ENCODE measurements at regions of chr18 and their contacts with region 1.

Region 1: DNA sequence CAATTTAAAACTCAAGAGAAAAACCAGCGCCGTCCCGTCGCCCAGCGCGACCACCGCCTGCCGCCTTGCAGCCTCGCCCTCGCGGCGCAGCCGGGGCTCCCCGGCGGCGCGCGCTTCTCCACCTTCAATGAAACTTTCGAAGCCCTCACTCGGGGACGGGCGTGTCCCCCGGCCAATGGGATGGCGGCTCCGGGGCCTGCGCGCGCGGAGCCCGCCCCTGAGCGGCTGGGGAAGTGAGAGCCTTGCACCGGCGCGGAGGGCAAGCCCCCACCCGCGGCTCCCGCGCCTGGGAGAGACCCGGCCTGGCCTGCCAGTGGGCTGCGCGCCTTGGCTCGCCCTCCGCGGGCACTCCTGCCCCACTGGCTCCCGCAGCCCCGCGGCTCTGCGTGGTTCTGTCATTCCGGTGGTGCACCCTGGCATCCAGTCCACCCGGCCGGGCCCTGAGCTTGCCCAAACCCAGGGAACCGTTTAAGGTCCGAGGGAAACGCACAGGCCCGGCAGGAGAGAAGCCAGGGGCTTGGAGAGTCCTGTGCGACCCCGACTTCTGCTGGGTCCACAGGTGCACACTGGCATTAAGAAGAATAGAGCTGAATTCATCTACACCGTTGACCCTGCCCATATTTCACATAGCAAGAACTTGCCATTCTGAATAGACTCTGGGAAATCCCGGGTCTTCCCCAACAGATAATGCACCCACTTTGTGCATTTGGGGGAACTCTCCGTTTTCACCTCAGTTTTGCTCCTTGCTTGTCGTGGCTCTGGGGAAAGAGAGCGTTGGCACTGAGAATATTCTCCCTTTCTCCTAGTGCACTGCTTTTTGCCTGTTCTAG is at the start of gene PIEZO2:
- DNase-seq: peak; percentile 29 to 36
- ATAC-seq: peak; percentile 50 to 81 (median 67)
- H3K4me3 ChIP-seq: peak within 1 kb of the TSS; percentile 4 to 53 (median 40)
- H3K27ac ChIP-seq: no peak within 1 kb of the TSS
- H3K4me1 ChIP-seq: peaks cover 0 to 28% (median 15%) of the 10 kb centered on the region in 9 donors
- H3K27me3 ChIP-seq: peaks cover 20 to 85% (median 70%) of the 10 kb centered on the region in 7 donors
- CTCF ChIP-seq: no peak
- total RNA-seq, gene PIEZO2: 0.11 to 1.4 (median 0.26) TPM in 9 of 10 donors, not detected in the other

Region 2: DNA sequence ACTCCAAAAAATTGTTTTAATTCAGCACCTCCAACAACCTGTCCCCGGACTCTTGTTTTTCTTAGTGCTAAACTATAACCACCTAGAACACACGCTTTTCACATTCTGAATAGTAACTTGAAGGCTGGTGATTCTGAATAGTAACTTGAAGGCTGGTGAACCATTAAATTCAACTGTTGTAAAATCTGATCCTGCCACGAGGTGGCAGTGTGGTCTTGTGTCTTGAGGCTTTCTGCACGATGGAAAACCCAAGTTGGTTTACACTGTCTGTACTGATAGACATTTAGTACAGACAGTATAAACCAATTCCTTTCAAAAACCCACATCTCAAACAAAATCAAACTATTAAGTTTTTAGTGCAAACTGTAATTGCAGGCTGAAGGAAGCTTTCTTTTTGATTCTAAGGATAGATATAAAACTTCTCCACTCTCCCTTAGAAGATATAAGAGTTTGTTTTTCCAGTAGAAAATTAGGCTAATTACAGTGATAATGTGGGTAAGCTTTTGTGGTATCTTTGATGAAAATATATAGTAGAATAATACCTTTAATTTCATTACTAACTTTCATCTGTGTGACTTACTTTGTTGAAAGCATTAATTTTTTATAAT is 1178.2 kb before region 1 on chr18:
- intact Hi-C with region 1: loop called in 1 of 10 experiments (anchors 10 kb)
- DNase-seq: peak in 1 of 2 donors; percentile 83
- ATAC-seq: peak; percentile 48 to 82 (median 67)
- H3K4me3 ChIP-seq: no peak overlapping the region
- H3K27ac ChIP-seq: no peak overlapping the region
- H3K4me1 ChIP-seq: peaks cover 0 to 23% (median 3%) of the 10 kb centered on the region in 9 donors
- H3K27me3 ChIP-seq: peaks cover 0 to 24% (median 0%) of the 10 kb centered on the region in 7 donors
- CTCF ChIP-seq: peak; percentile 64 to 89 (median 84)

Region 3: GRCh38 chr18:10787293-10787901 is 362.3 kb before region 1 on chr18:
- intact Hi-C with region 1: loop called in 1 of 10 experiments (anchors 10 kb)
- DNase-seq: peak; percentile 50 to 69
- ATAC-seq: peak in 1 of 8 donors; percentile 42
- H3K4me3 ChIP-seq: no peak overlapping the region
- H3K27ac ChIP-seq: no peak overlapping the region
- H3K4me1 ChIP-seq: peaks cover 0 to 20% (median 0%) of the 10 kb centered on the region in 9 donors
- H3K27me3 ChIP-seq: peaks cover 0 to 16% (median 7%) of the 10 kb centered on the region in 7 donors
- CTCF ChIP-seq: peak; percentile 24 to 89 (median 67)

Region 4: GRCh38 chr18:10860928-10861327 is 288.7 kb before region 1 on chr18:
- intact Hi-C with region 1: loop called in 3 of 10 experiments (anchors 10 kb)
- DNase-seq: no peak
- ATAC-seq: no peak
- H3K4me3 ChIP-seq: no peak overlapping the region
- H3K27ac ChIP-seq: no peak overlapping the region
- H3K4me1 ChIP-seq: no peaks in the 10 kb centered on the region
- H3K27me3 ChIP-seq: peaks cover 0 to 5% (median 0%) of the 10 kb centered on the region in 7 donors
- CTCF ChIP-seq: no peak

Region 5: DNA sequence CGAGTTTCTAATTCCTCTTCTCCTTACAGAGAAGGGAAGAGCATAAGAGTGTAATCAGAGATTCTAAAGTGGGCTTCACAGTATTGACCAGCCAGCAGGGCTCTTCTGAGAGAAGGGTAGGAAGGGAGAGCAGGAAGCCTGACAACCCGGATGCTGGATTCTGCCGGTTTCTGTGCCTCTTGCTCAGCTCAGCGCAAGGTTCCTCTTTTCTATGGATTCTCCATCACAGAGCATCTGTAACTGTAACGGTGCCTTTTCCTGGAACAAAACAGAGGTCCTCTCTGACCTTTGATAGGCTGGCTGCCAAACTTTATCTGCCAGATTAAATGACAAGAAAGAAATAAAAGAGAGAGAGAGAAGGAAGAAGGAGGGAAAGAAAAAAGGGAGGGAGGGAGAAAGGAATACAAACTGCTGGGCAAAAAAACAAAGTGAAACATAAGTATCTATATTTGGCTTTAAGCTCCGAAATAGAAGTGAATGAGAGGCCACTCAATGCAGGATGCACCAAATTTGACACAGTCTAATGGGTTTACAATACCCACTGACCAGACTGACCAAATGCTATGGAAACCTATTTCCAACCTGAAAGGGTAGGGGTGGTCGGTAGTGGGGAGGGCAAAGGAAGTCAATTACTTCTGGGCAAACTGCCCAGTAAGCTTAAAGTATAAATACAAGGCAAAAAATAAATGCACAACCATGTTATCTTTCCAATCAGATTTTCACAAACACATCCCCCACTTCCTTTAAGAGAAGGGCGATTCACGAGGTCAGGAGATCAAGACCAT is 59.5 kb before region 1 on chr18:
- intact Hi-C with region 1: loop called in 1 of 10 experiments (anchors 10 kb)
- DNase-seq: no peak
- ATAC-seq: peak in 1 of 8 donors; percentile 42
- H3K4me3 ChIP-seq: no peak overlapping the region
- H3K27ac ChIP-seq: no peak overlapping the region
- H3K4me1 ChIP-seq: peaks cover 0 to 10% (median 0%) of the 10 kb centered on the region in 9 donors
- H3K27me3 ChIP-seq: peaks cover 0 to 29% (median 4%) of the 10 kb centered on the region in 7 donors
- CTCF ChIP-seq: no peak